BJ (cell line): ENCODE measurements at regions of chr6 and their contacts with region 1.

Region 1: DNA sequence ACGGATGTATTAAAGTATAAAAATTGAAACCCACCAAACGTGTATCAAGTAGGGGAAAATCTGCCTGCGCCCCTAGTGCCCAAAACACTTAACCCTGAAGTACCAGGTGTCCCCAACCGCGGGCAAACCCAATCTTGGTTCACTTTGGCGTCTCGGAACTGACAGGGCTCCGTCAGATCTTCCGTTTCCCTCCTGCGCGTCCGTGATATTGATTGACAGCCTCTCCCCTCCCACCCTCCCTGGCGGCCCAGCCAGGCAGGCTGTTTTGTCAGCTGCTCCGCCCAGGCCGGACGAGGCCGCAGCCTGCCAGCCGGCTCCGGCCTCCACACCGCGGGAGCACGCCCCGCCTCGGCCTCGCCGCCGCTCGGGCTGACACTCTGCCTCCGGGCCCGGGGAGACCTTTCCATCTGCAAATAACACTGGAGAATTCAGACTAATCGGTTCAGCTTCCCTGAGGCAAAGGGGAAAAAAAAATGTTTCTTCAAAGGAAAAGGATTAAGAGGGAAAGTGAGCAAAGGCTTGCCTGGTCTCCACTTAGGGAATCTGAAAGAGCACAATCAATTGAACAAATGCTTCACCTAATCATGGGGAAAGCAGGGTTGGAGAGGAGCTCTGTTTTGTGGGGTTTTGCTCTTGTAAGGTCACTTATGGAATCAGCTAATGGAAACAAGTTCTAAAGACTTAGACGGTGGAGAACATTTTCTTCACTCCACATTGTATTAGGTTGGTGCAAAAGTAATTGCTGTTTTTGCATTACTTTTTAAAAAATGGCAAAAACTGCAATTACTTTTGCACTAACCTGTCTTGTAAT is 235.0 kb upstream of the MCHR2 start:
- DNase-seq: no peak
- H3K4me3 ChIP-seq: peak overlapping the region; percentile 15
- H3K27me3 ChIP-seq: no peaks in the 10 kb centered on the region
- CTCF ChIP-seq: peak; percentile 31; the same call in 1 of the 2 replicates

Region 2: DNA sequence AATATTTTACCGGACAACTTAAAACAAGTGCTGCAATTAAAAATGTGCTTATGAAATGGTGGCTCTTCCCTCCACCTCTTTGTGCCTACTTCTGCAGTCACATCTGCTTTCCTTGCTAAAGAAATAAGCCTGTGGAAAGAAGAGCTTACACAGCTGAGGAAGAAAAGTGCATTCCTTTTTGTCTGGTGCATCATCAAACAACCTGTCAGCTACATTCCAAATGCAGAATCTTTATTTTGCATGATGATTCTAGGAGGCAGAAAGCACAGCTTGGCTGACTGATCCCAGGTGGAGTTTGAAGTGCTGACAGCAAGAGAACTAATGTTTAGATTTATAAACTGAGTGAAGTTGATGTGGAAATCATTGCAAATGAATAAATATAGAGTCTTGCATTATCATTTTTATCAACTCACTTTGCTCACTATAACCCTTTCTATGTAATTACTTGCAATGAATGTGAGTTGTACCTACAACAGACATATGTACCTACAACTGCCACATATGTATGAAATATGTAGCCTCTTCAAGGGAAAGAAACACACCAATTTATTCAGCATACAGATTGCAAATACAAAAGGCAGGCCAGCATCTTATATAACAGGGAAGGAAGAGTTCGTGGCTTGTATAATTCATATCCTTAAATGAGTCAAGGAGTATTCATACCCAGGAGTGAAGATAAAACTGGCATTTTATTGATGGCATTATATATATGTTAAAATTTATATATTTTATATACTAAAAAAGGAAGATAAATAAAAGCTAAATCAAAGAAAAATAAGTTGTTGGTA is 11.6 kb before region 1 on chr6:
- CTCF ChIA-PET with region 1: interaction called, 13 read pairs
- POLR2A ChIA-PET with region 1: no interaction called
- DNase-seq: no peak
- H3K4me3 ChIP-seq: no peak overlapping the region
- H3K27me3 ChIP-seq: no peaks in the 10 kb centered on the region
- CTCF ChIP-seq: no peak

Region 3: GRCh38 chr6:100320686-100321085 is 91.7 kb after region 1 on chr6:
- CTCF ChIA-PET with region 1: no interaction called
- POLR2A ChIA-PET with region 1: no interaction called
- DNase-seq: no peak
- H3K4me3 ChIP-seq: no peak overlapping the region
- H3K27me3 ChIP-seq: no peaks in the 10 kb centered on the region
- CTCF ChIP-seq: no peak